ENCODE measurements at regions of chr17 and their contacts with region 1.

Region 1: DNA sequence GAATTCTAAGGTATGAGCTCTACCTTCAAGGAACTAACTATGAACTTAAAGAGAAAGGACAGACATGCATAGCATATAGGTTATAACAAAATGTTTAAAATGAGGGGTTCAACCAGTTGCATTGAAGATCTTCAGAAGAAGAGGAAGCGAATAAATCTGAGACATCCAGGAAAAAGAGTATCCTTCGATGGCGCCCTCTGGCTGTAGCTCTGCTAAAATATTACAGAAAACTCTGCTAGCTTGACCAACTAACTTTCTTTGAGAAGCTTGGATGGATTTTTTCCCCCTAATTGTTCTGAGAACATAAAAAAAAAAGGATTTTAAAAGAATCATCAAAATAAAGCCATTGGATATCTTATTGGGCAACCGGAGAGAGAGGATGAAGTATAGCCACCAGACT is 659.9 kb upstream of the SOX9 start:
- DNase-seq: no peak
- ATAC-seq: no peak
- H3K4me3 ChIP-seq: no peak overlapping the region
- H3K27ac ChIP-seq: no peak overlapping the region
- H3K4me1 ChIP-seq: no peaks in the 10 kb centered on the region
- H3K27me3 ChIP-seq: no peaks in the 10 kb centered on the region
- CTCF ChIP-seq: peak; percentile 17

Region 2: DNA sequence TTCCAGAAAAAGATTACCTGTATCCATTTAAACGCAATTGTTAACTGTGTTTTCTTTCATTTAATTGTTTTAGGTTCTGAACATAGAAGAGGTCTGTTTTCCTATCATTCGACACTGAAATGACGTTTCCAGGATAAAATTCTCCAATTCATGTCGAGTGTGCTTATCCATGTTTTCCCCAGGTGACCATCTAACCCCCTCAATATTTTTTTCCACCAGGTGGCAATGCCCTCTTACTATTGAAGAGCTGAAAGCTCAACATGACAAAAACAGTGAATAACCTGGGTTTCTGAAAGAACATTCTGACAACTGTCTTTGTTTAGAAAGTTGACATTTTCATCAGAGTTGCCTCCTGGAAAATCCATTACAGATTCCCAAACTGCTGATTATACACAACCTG is 342.9 kb before region 1 on chr17:
- intact Hi-C with region 1: loop called (anchors 10 kb)
- DNase-seq: no peak
- ATAC-seq: no peak
- H3K4me3 ChIP-seq: no peak overlapping the region
- H3K27ac ChIP-seq: no peak overlapping the region
- H3K4me1 ChIP-seq: no peaks in the 10 kb centered on the region
- H3K27me3 ChIP-seq: no peaks in the 10 kb centered on the region
- CTCF ChIP-seq: peak; percentile 47

Region 3: GRCh38 chr17:71163121-71163812 is 297.7 kb before region 1 on chr17:
- intact Hi-C with region 1: no loop called
- DNase-seq: no peak
- ATAC-seq: no peak
- H3K4me3 ChIP-seq: no peak overlapping the region
- H3K27ac ChIP-seq: no peak overlapping the region
- H3K4me1 ChIP-seq: no peaks in the 10 kb centered on the region
- H3K27me3 ChIP-seq: no peaks in the 10 kb centered on the region
- CTCF ChIP-seq: no peak

Measured in psoas muscle (tissue), 8 donors.